Naive thymus-derived CD4-positive, alpha-beta T cell (primary cell): ENCODE measurements at regions of chr1 and their contacts with region 1.

Region 1: GRCh38 chr1:58546520-58547308 is at the start of gene OMA1:
- DNase-seq: peak; percentile 96 to 98 (median 98)
- ATAC-seq: peak; percentile 97
- H3K4me3 ChIP-seq: peak within 1 kb of the TSS; percentile 65
- H3K4me3 Mint-ChIP-seq: peak within 1 kb of the TSS; percentile 92 to 98 (median 96)
- H3K27ac ChIP-seq: peak within 1 kb of the TSS; percentile 95
- H3K27ac Mint-ChIP-seq: peak within 1 kb of the TSS; percentile 95 to 99 (median 99)
- H3K4me1 ChIP-seq: peaks cover 7% of the 10 kb centered on the region in 2 donors
- H3K4me1 Mint-ChIP-seq: peaks cover 11 to 44% (median 33%) of the 10 kb centered on the region in 7 donors
- H3K27me3 ChIP-seq: no peaks in the 10 kb centered on the region
- H3K27me3 Mint-ChIP-seq: peaks cover 0 to 28% (median 0%) of the 10 kb centered on the region in 5 donors
- total RNA-seq, gene OMA1: 22.7 to 72.5 (median 46.5) TPM

Region 2: GRCh38 chr1:58249737-58250586 is 296.8 kb before region 1 on chr1:
- CTCF ChIA-PET with region 1: no interaction called
- POLR2A ChIA-PET with region 1: no interaction called
- intact Hi-C with region 1: loop called in 1 of 2 experiments (anchors 1 kb)
- DNase-seq: peak in 3 of 9 donors; percentile 7 to 15 (median 14)
- ATAC-seq: peak; percentile 34
- H3K4me3 ChIP-seq: no peak overlapping the region
- H3K4me3 Mint-ChIP-seq: peak overlapping the region; percentile 20 to 79 (median 69)
- H3K27ac ChIP-seq: no peak overlapping the region
- H3K27ac Mint-ChIP-seq: no peak overlapping the region
- H3K4me1 ChIP-seq: peaks cover 0 to 2% of the 10 kb centered on the region in 2 donors
- H3K4me1 Mint-ChIP-seq: peaks cover 0 to 21% (median 13%) of the 10 kb centered on the region in 7 donors
- H3K27me3 ChIP-seq: peaks cover 0 to 7% of the 10 kb centered on the region in 2 donors
- H3K27me3 Mint-ChIP-seq: peaks cover 42 to 56% (median 45%) of the 10 kb centered on the region in 5 donors

Region 3: DNA sequence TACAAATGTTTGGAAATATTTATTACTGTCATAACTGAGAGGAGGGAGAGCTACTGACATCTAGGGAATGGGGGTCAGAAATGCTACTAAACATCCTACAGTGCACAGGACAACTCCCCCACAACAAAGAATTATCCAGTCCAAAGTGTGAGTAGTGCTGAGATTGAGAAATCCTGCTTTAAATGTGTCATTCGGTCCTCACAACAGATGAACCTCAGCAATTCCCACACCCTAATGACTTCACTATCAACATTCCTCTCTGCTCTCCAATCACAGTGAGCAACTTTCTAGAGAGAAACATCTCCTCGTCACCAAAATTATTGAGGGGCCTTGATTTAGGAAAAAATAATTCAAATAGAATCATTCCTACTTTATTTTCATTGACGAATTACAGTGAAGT is 18.2 kb before region 1 on chr1:
- CTCF ChIA-PET with region 1: interaction called, 5 read pairs
- POLR2A ChIA-PET with region 1: interaction called, 3 read pairs
- intact Hi-C with region 1: loop called in 1 of 2 experiments (anchors 2 kb)
- DNase-seq: no peak
- ATAC-seq: no peak
- H3K4me3 ChIP-seq: no peak overlapping the region
- H3K4me3 Mint-ChIP-seq: no peak overlapping the region
- H3K27ac ChIP-seq: no peak overlapping the region
- H3K27ac Mint-ChIP-seq: no peak overlapping the region
- H3K4me1 ChIP-seq: no peaks in the 10 kb centered on the region
- H3K4me1 Mint-ChIP-seq: peaks cover 0 to 12% (median 3%) of the 10 kb centered on the region in 7 donors
- H3K27me3 ChIP-seq: no peaks in the 10 kb centered on the region
- H3K27me3 Mint-ChIP-seq: no peaks in the 10 kb centered on the region

Region 4: GRCh38 chr1:58699011-58699762 is 152.5 kb after region 1 on chr1:
- CTCF ChIA-PET with region 1: no interaction called
- POLR2A ChIA-PET with region 1: interaction called, 5 read pairs
- intact Hi-C with region 1: loop called (anchors 1 kb)
- DNase-seq: no peak
- ATAC-seq: peak; percentile 4
- H3K4me3 ChIP-seq: peak overlapping the region; percentile 80
- H3K4me3 Mint-ChIP-seq: peak overlapping the region; percentile 92 to 100 (median 98)
- H3K27ac ChIP-seq: peak overlapping the region; percentile 88
- H3K27ac Mint-ChIP-seq: peak overlapping the region; percentile 95 to 100 (median 98)
- H3K4me1 ChIP-seq: peaks cover 13 to 23% of the 10 kb centered on the region in 2 donors
- H3K4me1 Mint-ChIP-seq: peaks cover 4 to 22% (median 13%) of the 10 kb centered on the region in 7 donors
- H3K27me3 ChIP-seq: no peaks in the 10 kb centered on the region
- H3K27me3 Mint-ChIP-seq: peaks cover 0 to 3% (median 0%) of the 10 kb centered on the region in 5 donors

Region 5: GRCh38 chr1:59759156-59759925 is 1212.6 kb after region 1 on chr1:
- CTCF ChIA-PET with region 1: interaction called, 5 read pairs
- POLR2A ChIA-PET with region 1: no interaction called
- intact Hi-C with region 1: loop called in 1 of 2 experiments (anchors 1 kb)
- DNase-seq: peak; percentile 46 to 76 (median 64)
- ATAC-seq: peak; percentile 95
- H3K4me3 ChIP-seq: no peak overlapping the region
- H3K4me3 Mint-ChIP-seq: peak overlapping the region in 7 of 10 donors; percentile 9 to 64 (median 37)
- H3K27ac ChIP-seq: no peak overlapping the region
- H3K27ac Mint-ChIP-seq: peak overlapping the region in 2 of 9 donors; percentile 24 to 32
- H3K4me1 ChIP-seq: no peaks in the 10 kb centered on the region
- H3K4me1 Mint-ChIP-seq: peaks cover 0 to 8% (median 4%) of the 10 kb centered on the region in 7 donors
- H3K27me3 ChIP-seq: no peaks in the 10 kb centered on the region
- H3K27me3 Mint-ChIP-seq: no peaks in the 10 kb centered on the region